Activated T-helper 1 cell treated with anti-CD3 and anti-CD28 coated beads, Interleukin-12 subunit alpha, Interleukin-12 subunit beta, Interleukin-2, Interleukin-4 antibody, amounts not matched to agents 30 ng/mL and 10 ng/mL and 1 ng/mL, durations not matched to agents 14 hours and 24 hours and 36 hours (primary cell): ENCODE measurements at regions of chr2 and their contacts with region 1.

Region 1: GRCh38 chr2:112054847-112055729 is at the start of gene TMEM87B:
- DNase-seq: peak; percentile 95
- H3K4me3 Mint-ChIP-seq: peak within 1 kb of the TSS; percentile 93
- H3K27ac Mint-ChIP-seq: peak within 1 kb of the TSS; percentile 98
- H3K4me1 Mint-ChIP-seq: peaks cover 43% of the 10 kb centered on the region
- H3K27me3 Mint-ChIP-seq: peaks cover 2% of the 10 kb centered on the region
- total RNA-seq, gene TMEM87B: 15.0 and 16.6 TPM in 2 replicates

Region 2: GRCh38 chr2:110677530-110678456 is 1377.3 kb before region 1 on chr2 and contains the start of gene BUB1:
- intact Hi-C with region 1: loop called (anchors 10 kb)
- DNase-seq: peak; percentile 96
- H3K4me3 Mint-ChIP-seq: peak within 1 kb of the TSS; percentile 84
- H3K27ac Mint-ChIP-seq: peak within 1 kb of the TSS; percentile 88
- H3K4me1 Mint-ChIP-seq: peaks cover 57% of the 10 kb centered on the region
- H3K27me3 Mint-ChIP-seq: peaks cover 5% of the 10 kb centered on the region
- total RNA-seq, gene BUB1: 56.1 and 61.9 TPM in 2 replicates

Region 3: DNA sequence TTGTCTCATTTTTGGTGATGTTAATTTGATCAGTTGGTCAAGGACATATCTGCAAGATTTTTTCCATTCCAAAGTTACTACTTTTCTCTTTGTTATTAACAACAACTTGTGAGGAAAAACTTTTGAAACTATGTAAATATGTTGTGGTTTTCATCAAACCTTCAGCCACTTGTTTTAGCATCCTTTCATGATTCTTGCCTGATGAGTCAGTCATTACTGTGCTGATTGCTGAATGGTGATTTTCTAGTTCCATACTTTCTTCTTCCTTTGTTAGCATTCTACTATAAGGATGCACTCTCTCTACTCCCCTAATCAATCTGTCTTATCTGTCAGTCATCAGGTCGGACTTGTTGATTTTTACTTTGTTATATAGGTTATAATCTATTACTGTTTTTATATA is 10.9 kb after region 1 on chr2:
- intact Hi-C with region 1: loop called (anchors 1 kb)
- DNase-seq: no peak
- H3K4me3 Mint-ChIP-seq: peak overlapping the region; percentile 31
- H3K27ac Mint-ChIP-seq: peak overlapping the region; percentile 85
- H3K4me1 Mint-ChIP-seq: peaks cover 48% of the 10 kb centered on the region
- H3K27me3 Mint-ChIP-seq: no peaks in the 10 kb centered on the region

Region 4: DNA sequence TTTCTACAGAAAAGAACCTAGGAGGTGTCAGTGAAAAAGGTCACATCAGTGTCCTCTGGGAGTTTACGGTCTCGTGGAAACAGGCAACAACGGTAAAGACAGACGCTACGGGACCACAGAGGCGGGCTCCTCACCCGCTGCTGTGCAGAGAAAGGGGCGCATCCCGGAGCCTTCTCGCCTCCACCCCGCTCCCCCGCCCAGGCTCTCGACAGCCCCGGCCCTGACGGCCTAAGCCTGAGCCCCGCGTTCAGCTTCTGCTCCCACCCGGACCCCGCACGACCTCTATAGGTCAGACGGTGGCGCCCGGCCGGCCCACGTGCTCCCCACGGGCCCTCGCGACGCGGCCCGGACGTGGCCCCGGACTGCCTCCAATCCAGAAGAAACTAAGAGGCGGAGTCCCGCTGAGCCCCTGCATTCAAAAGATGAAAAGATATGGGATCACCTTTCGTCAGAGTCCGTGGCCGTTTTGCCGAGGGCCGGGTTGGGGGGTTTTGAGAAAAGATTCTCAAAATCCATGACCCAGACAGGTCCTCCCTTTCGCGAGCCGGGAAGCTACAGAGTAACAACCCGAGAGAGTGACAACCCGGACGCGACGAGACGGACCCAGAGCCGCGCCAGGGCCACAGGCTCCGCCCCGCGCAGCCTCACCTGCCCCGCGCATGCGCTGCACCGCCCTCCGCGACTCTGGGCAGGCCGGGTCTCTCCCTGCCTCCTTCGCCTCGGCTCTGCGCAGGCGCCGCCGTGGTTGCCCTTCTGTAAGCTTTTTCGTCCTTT is 199.6 kb after region 1 on chr2 and contains the start of gene ZC3H8:
- intact Hi-C with region 1: loop called (anchors 1 kb)
- DNase-seq: peak; percentile 96
- H3K4me3 Mint-ChIP-seq: peak within 1 kb of the TSS; percentile 50
- H3K27ac Mint-ChIP-seq: peak within 1 kb of the TSS; percentile 91
- H3K4me1 Mint-ChIP-seq: peaks cover 27% of the 10 kb centered on the region
- H3K27me3 Mint-ChIP-seq: no peaks in the 10 kb centered on the region
- total RNA-seq, gene ZC3H8: 32.9 and 37.4 TPM in 2 replicates

Region 5: GRCh38 chr2:112481050-112481527 is 426.0 kb after region 1 on chr2:
- intact Hi-C with region 1: loop called (anchors 2 kb)
- DNase-seq: peak; percentile 79
- H3K4me3 Mint-ChIP-seq: peak overlapping the region; percentile 87
- H3K27ac Mint-ChIP-seq: peak overlapping the region; percentile 96
- H3K4me1 Mint-ChIP-seq: peaks cover 40% of the 10 kb centered on the region
- H3K27me3 Mint-ChIP-seq: peaks cover 4% of the 10 kb centered on the region